ENCODE measurements at regions of chr3 and their contacts with region 1.

Region 1: GRCh38 chr3:58305882-58306711 is at the starts of genes HTD2 and RPP14:
- DNase-seq: peak; percentile 97 to 99 (median 98)
- H3K4me3 ChIP-seq: peak within 1 kb of the TSS; percentile 99
- H3K4me3 Mint-ChIP-seq: peak within 1 kb of the TSS; percentile 90 to 100 (median 99)
- H3K27ac ChIP-seq: peak within 1 kb of the TSS; percentile 97
- H3K27ac Mint-ChIP-seq: peak within 1 kb of the TSS; percentile 99 to 100 (median 100)
- H3K4me1 ChIP-seq: peaks cover 25% of the 10 kb centered on the region
- H3K4me1 Mint-ChIP-seq: peaks cover 35 to 46% (median 39%) of the 10 kb centered on the region in 3 donors
- H3K27me3 ChIP-seq: peaks cover 3% of the 10 kb centered on the region
- H3K27me3 Mint-ChIP-seq: peaks cover 12 to 19% of the 10 kb centered on the region in 2 donors
- total RNA-seq, gene HTD2: 12.4 to 14.6 TPM
- total RNA-seq, gene RPP14: 22.7 to 24.5 TPM

Region 2: DNA sequence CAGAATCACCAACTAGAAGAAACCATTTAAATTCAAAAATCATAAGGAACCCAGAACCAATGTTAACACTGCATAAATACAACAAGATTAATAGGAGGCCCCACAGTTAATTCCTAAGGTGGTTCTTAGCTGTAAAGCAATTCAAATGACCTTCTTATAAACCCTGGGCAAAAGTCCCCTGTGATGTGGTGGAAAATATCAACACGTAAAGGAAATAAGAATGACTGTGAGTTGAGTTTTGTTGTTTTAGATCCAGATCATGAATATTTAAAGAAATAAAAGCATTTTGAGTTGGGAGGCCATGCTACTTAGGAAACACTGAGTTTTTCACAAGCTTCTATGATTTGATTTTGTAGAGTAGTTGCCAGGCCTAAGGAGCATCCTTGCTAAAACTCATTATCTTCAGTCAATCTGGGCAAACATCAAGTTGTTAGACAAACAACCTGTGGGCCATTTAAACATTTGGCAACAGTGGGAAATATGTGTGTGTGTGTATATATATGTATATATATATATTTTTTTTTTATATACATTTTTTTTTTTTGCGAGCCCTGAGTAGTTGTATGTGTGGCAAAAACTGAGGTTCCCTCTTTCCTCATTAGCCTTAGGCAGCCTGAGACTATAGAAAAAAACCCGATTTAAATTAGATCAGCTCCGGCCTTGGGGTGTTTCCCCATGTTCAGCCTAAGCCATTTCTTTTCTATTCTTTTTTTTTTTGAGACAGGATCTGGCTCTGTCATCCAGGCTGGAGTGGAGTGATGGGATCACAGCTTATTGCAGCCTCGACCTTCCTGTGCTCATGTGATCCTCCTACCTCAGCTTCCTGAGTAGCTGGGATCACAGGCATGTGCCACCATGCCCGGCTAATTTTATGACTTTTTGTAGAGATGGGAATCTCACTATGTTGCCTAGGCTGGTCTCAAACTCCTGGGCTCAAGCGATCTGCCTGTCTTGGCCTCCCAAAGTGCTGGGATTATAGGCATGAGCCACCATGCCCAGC is 18.6 kb after region 1 on chr3:
- CTCF ChIA-PET with region 1: interaction called, 69 read pairs
- POLR2A ChIA-PET with region 1: no interaction called
- DNase-seq: no peak
- H3K4me3 ChIP-seq: no peak overlapping the region
- H3K4me3 Mint-ChIP-seq: no peak overlapping the region
- H3K27ac ChIP-seq: no peak overlapping the region
- H3K27ac Mint-ChIP-seq: peak overlapping the region; percentile 43 to 86 (median 52)
- H3K4me1 ChIP-seq: peaks cover 7% of the 10 kb centered on the region
- H3K4me1 Mint-ChIP-seq: peaks cover 3 to 26% (median 14%) of the 10 kb centered on the region in 3 donors
- H3K27me3 ChIP-seq: no peaks in the 10 kb centered on the region
- H3K27me3 Mint-ChIP-seq: no peaks in the 10 kb centered on the region

Region 3: GRCh38 chr3:58414538-58415197 is 108.6 kb after region 1 on chr3:
- CTCF ChIA-PET with region 1: interaction called, 16 read pairs
- POLR2A ChIA-PET with region 1: no interaction called
- DNase-seq: peak in 4 of 5 donors; percentile 9 to 37 (median 28)
- H3K4me3 ChIP-seq: no peak overlapping the region
- H3K4me3 Mint-ChIP-seq: no peak overlapping the region
- H3K27ac ChIP-seq: no peak overlapping the region
- H3K27ac Mint-ChIP-seq: no peak overlapping the region
- H3K4me1 ChIP-seq: no peaks in the 10 kb centered on the region
- H3K4me1 Mint-ChIP-seq: peaks cover 0 to 7% (median 3%) of the 10 kb centered on the region in 3 donors
- H3K27me3 ChIP-seq: no peaks in the 10 kb centered on the region
- H3K27me3 Mint-ChIP-seq: no peaks in the 10 kb centered on the region

Region 4: DNA sequence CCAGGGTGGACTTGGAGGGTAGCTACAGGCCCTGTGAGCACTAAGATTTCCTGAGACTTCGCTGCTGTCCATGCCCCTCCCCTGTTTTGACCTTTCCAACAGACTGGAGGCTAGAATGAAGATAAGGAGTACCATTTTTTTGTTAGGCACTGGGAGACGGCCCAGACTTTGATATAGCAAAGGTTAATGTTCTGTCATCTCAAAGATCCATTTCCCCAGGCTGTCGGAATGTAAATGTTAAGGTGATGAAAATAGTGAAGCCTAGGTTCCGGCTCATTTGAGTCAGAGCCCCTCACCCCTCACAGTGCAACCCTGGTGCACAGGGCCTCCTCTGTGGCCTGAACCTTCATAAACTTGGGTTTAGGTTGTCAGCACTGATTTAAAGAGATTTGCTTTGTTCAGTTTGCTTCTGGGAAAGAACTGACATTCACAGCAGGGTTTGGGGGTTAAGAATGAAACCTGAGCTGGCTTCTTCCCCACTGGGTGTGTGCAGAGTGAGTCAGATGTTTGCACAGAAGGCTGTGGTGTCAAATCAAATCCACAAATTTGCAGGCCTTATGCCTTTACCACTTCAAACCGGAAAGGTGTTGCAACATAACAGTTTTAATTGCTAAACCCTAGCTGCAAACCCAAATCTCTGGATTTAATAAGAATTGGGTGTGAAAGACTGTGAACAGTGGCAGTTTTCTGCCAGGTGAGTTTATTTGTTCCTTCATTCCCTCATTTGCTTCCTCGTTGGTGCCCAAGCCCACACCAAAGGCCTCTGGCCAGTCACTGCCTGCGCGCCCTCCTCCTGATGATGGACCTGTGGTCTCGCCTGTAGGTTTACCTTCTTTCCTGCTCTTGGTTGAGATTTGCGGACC is 165.2 kb after region 1 on chr3:
- CTCF ChIA-PET with region 1: interaction called, 11 read pairs
- POLR2A ChIA-PET with region 1: no interaction called
- DNase-seq: peak in 2 of 5 donors; percentile 64 to 72
- H3K4me3 ChIP-seq: no peak overlapping the region
- H3K4me3 Mint-ChIP-seq: peak overlapping the region; percentile 8 to 81 (median 69)
- H3K27ac ChIP-seq: peak overlapping the region; percentile 22
- H3K27ac Mint-ChIP-seq: peak overlapping the region; percentile 49 to 95 (median 88)
- H3K4me1 ChIP-seq: peaks cover 26% of the 10 kb centered on the region
- H3K4me1 Mint-ChIP-seq: peaks cover 48 to 59% (median 48%) of the 10 kb centered on the region in 3 donors
- H3K27me3 ChIP-seq: no peaks in the 10 kb centered on the region
- H3K27me3 Mint-ChIP-seq: no peaks in the 10 kb centered on the region

Region 5: DNA sequence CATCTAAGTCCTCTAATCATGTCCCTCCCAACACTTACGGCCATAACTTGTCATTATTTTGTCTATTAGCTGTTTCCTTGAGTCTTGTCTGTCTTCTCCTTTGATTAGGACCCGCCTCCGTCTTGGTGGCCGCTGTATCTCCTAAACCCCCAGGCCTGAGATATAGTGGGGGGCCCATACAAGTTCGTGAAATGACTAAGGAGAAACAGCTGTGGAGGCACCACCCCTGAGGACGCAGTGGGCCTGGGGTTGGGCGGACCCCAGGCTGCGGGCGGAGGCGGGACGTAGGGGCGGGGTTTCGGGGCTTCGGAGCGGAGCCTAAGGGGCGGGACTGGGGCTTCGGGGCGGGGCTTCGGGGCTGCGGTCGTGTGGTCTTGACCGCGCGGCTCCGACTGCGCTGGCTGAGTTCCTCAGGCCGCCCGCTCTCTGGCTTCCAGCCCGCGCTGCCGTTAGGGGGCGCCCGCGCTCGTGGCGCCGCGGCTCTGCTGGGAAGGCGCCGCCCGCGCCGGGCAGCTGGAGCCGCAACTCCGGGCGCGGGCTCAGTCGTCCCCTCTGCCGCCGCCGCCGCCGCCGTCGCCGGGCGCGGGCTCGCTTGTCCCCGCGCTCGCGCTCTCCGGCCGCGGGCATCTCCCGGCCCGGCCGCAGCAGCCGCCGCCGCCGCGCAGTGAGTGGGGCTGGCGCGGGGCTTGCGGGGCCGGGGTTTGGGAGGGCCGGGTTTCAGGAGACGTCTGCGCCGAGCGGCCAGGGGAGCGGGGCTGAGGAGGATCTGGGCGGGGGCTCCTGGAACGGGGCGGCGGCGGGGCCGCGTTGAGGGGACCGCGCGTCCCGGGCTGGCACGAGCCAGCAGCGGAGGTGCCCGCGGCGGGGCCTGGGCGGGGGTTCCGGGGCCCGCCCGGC is 185.7 kb after region 1 on chr3 and contains the start of gene KCTD6:
- CTCF ChIA-PET with region 1: interaction called, 39 read pairs
- POLR2A ChIA-PET with region 1: interaction called, 4 read pairs
- DNase-seq: peak; percentile 79 to 87 (median 85)
- H3K4me3 ChIP-seq: peak within 1 kb of the TSS; percentile 88
- H3K4me3 Mint-ChIP-seq: peak within 1 kb of the TSS; percentile 86 to 99 (median 92)
- H3K27ac ChIP-seq: peak within 1 kb of the TSS; percentile 53
- H3K27ac Mint-ChIP-seq: peak within 1 kb of the TSS; percentile 74 to 96 (median 92)
- H3K4me1 ChIP-seq: peaks cover 40% of the 10 kb centered on the region
- H3K4me1 Mint-ChIP-seq: peaks cover 64 to 74% (median 71%) of the 10 kb centered on the region in 3 donors
- H3K27me3 ChIP-seq: no peaks in the 10 kb centered on the region
- H3K27me3 Mint-ChIP-seq: no peaks in the 10 kb centered on the region
- total RNA-seq, gene KCTD6: 5.5 to 5.9 TPM

Region 6: GRCh38 chr3:58630076-58630709 is 324.1 kb after region 1 on chr3:
- CTCF ChIA-PET with region 1: interaction called, 15 read pairs
- POLR2A ChIA-PET with region 1: no interaction called
- DNase-seq: peak; percentile 17 to 68 (median 41)
- H3K4me3 ChIP-seq: no peak overlapping the region
- H3K4me3 Mint-ChIP-seq: no peak overlapping the region
- H3K27ac ChIP-seq: no peak overlapping the region
- H3K27ac Mint-ChIP-seq: peak overlapping the region in 1 of 8 donors; percentile 25
- H3K4me1 ChIP-seq: no peaks in the 10 kb centered on the region
- H3K4me1 Mint-ChIP-seq: peaks cover 0 to 6% (median 3%) of the 10 kb centered on the region in 3 donors
- H3K27me3 ChIP-seq: no peaks in the 10 kb centered on the region
- H3K27me3 Mint-ChIP-seq: peaks cover 6 to 23% of the 10 kb centered on the region in 2 donors